Heart right ventricle (tissue), 16 donors: ENCODE measurements at regions of chr5 and their contacts with region 1.

Region 1: DNA sequence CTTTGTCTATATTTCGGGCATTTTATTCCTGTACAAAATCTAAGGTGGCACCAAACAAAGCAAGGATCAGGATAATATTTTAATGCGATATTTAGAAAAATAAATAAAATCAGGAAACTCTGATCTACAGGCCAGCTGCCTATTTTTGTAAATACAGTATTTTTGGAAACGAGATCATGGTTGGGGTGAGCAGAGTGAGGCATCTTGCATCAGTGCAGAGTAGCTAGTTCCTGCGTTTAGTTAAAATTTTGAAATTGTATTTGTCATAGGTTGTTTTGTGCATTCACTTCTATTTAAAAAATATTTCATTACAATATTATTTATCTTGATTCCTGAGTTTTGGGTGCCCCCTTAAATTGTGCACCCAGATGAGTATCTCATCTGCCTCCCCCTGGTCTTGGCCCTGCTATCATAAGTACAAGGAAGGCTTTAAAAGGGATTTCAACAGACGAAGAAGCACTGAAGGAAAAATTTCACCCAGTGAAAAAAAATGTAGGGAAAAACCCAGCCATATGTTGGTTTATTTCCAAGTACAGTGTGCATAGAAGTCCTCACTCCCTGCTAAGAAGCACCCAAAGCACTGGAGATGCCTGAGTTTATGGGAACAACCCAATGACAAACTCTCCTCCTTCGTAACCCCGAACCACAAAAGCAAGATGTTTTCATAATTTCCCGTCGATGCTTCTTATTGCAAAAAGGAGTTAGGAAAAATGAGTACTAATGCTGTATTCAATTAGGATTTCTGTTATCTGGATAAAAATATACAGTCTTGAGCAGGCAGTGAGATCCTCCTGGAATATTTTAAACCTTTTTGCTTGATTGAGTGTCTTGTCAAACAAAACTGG is 304.7 kb upstream of the CLINT1 start:
- DNase-seq: no peak
- ATAC-seq: no peak
- H3K4me3 ChIP-seq: no peak overlapping the region
- H3K27ac ChIP-seq: peak overlapping the region in 1 of 10 donors; percentile 19
- H3K4me1 ChIP-seq: peaks cover 0 to 9% (median 0%) of the 10 kb centered on the region in 9 donors
- H3K27me3 ChIP-seq: peaks cover 0 to 16% (median 0%) of the 10 kb centered on the region in 7 donors
- CTCF ChIP-seq: no peak

Region 2: DNA sequence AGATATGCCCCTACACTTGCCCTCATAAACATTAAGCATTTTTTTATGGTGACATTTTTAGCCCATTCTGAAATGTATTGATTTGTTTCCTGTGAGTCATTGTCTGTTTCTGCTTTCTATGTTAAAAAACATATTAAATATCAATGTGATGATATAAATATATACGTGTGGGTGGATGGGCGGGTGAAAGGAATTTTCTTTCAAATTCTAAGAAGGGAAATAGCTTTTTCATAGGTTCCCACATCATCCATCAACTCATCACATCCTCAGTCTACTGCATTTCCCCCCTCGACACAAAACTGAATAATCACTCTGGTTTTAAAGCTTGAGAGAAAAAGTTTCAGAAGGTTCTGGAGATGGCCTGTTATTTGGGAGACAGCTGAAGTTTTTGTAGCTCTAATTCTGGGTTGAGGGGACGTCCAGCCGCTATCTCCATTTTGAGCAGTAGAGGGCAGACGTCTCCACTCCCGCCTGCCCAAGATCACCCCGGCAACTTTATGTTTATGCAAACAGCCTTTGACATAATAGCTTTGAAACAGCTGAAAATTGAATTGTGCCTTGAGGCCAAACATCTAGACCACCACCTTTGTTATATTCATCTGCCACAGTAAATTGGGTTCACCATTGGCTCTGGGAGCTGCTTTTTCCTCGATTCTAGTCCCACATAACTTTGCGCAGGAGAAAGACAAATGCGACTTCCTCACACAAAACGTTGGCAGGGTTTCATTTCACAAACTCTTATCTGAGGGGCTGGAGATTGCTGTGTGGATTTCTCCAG is 88.5 kb before region 1 on chr5:
- intact Hi-C with region 1: loop called in 1 of 10 experiments (anchors 5 kb)
- DNase-seq: peak; percentile 28 to 62
- ATAC-seq: peak; percentile 59 to 92 (median 82)
- H3K4me3 ChIP-seq: peak overlapping the region in 8 of 10 donors; percentile 17 to 43 (median 32)
- H3K27ac ChIP-seq: peak overlapping the region in 8 of 10 donors; percentile 15 to 78 (median 52)
- H3K4me1 ChIP-seq: peaks cover 0 to 16% (median 3%) of the 10 kb centered on the region in 9 donors
- H3K27me3 ChIP-seq: no peaks in the 10 kb centered on the region
- CTCF ChIP-seq: peak; percentile 67 to 92 (median 85)